ENCODE measurements at regions of chr1 and their contacts with region 1.

Region 1: GRCh38 chr1:225931270-225932136 is 7.5 kb upstream of the PYCR2 start:
- DNase-seq: no peak
- H3K27ac ChIP-seq: no peak overlapping the region
- CTCF ChIP-seq: no peak

Region 2: GRCh38 chr1:226938903-226939437 is 1007.5 kb after region 1 on chr1:
- CTCF ChIA-PET with region 1: no interaction called
- POLR2A ChIA-PET with region 1: interaction called, 13 read pairs
- DNase-seq: no peak
- H3K27ac ChIP-seq: peak overlapping the region; percentile 98
- CTCF ChIP-seq: no peak